ENCODE measurements at regions of chr1 and their contacts with region 1.

Region 1: GRCh38 chr1:223845810-223846682 is at the start of gene TP53BP2:
- DNase-seq: peak; percentile 86 to 95 (median 90)
- ATAC-seq: peak; percentile 92
- H3K4me3 ChIP-seq: peak within 1 kb of the TSS; percentile 84
- H3K4me3 Mint-ChIP-seq: peak within 1 kb of the TSS; percentile 88 to 99 (median 96)
- H3K27ac ChIP-seq: peak within 1 kb of the TSS; percentile 99
- H3K27ac Mint-ChIP-seq: peak within 1 kb of the TSS; percentile 94 to 99 (median 98)
- H3K4me1 ChIP-seq: peaks cover 14 to 27% of the 10 kb centered on the region in 2 donors
- H3K4me1 Mint-ChIP-seq: peaks cover 23 to 53% (median 40%) of the 10 kb centered on the region in 7 donors
- H3K27me3 ChIP-seq: no peaks in the 10 kb centered on the region
- H3K27me3 Mint-ChIP-seq: peaks cover 0 to 4% (median under 1%) of the 10 kb centered on the region in 5 donors
- total RNA-seq, gene TP53BP2: 30.3 to 120 (median 45.4) TPM

Region 2: GRCh38 chr1:223142795-223143536 is 703.1 kb before region 1 on chr1 and contains the start of gene TLR5:
- CTCF ChIA-PET with region 1: no interaction called
- POLR2A ChIA-PET with region 1: no interaction called
- intact Hi-C with region 1: loop called in 1 of 2 experiments (anchors 10 kb)
- DNase-seq: peak; percentile 81 to 92 (median 87)
- ATAC-seq: peak; percentile 94
- H3K4me3 ChIP-seq: peak within 1 kb of the TSS; percentile 65
- H3K4me3 Mint-ChIP-seq: peak within 1 kb of the TSS; percentile 69 to 89 (median 81)
- H3K27ac ChIP-seq: peak within 1 kb of the TSS; percentile 69
- H3K27ac Mint-ChIP-seq: peak within 1 kb of the TSS in 8 of 9 donors; percentile 48 to 95 (median 90)
- H3K4me1 ChIP-seq: peaks cover 13 to 15% of the 10 kb centered on the region in 2 donors
- H3K4me1 Mint-ChIP-seq: peaks cover 13 to 35% (median 27%) of the 10 kb centered on the region in 7 donors
- H3K27me3 ChIP-seq: no peaks in the 10 kb centered on the region
- H3K27me3 Mint-ChIP-seq: peaks cover 0 to 10% (median 0%) of the 10 kb centered on the region in 5 donors
- total RNA-seq, gene TLR5: 3.1 to 8.0 (median 6.6) TPM in 4 of 5 experiments, not detected in the other

Region 3: DNA sequence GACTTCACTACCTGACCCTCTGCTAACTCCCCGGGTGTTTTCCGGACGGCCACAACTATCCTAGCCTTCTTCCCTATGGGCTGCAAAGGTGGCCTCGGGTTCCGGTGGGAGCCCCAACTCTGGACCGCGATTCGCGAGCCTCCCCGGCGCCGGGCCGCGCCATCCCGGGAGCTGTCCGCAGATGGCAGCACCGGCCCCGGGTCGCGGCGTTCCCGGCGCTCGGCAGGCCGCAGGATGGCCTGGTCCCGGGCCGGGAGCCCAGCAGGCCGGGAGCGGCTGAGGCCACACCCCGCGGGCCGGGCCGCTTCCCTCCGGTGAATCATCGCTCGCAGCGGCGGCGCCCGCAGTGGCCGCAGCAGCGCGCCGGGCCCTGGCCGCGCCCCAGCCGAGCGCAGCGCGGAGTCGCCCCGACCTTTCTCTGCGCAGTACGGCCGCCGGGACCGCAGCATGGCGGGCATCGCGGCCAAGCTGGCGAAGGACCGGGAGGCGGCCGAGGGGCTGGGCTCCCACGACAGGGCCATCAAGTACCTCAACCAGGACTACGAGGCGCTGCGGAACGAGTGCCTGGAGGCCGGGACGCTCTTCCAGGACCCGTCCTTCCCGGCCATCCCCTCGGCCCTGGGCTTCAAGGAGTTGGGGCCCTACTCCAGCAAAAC is 133.7 kb before region 1 on chr1 and contains the start of gene CAPN2:
- CTCF ChIA-PET with region 1: no interaction called
- POLR2A ChIA-PET with region 1: interaction called, 3 read pairs
- intact Hi-C with region 1: loop called (anchors 2 to 5 kb)
- DNase-seq: peak; percentile 29 to 78 (median 51)
- ATAC-seq: peak; percentile 78
- H3K4me3 ChIP-seq: peak within 1 kb of the TSS; percentile 61
- H3K4me3 Mint-ChIP-seq: peak within 1 kb of the TSS; percentile 70 to 93 (median 84)
- H3K27ac ChIP-seq: peak within 1 kb of the TSS; percentile 83
- H3K27ac Mint-ChIP-seq: peak within 1 kb of the TSS; percentile 82 to 93 (median 88)
- H3K4me1 ChIP-seq: peaks cover 48 to 53% of the 10 kb centered on the region in 2 donors
- H3K4me1 Mint-ChIP-seq: peaks cover 52 to 69% (median 63%) of the 10 kb centered on the region in 7 donors
- H3K27me3 ChIP-seq: no peaks in the 10 kb centered on the region
- H3K27me3 Mint-ChIP-seq: peaks cover 0 to 8% (median 0%) of the 10 kb centered on the region in 5 donors
- total RNA-seq, gene CAPN2: 86.1 to 195 (median 117) TPM

Region 4: GRCh38 chr1:223860051-223860622 is 14.1 kb after region 1 on chr1:
- CTCF ChIA-PET with region 1: interaction called, 3 read pairs
- POLR2A ChIA-PET with region 1: interaction called, 11 read pairs
- intact Hi-C with region 1: no loop called
- DNase-seq: no peak
- ATAC-seq: no peak
- H3K4me3 ChIP-seq: no peak overlapping the region
- H3K4me3 Mint-ChIP-seq: no peak overlapping the region
- H3K27ac ChIP-seq: no peak overlapping the region
- H3K27ac Mint-ChIP-seq: no peak overlapping the region
- H3K4me1 ChIP-seq: no peaks in the 10 kb centered on the region
- H3K4me1 Mint-ChIP-seq: no peaks in the 10 kb centered on the region
- H3K27me3 ChIP-seq: no peaks in the 10 kb centered on the region
- H3K27me3 Mint-ChIP-seq: peaks cover 0 to 26% (median 0%) of the 10 kb centered on the region in 5 donors

Region 5: GRCh38 chr1:224223819-224224714 is 378.0 kb after region 1 on chr1:
- CTCF ChIA-PET with region 1: no interaction called
- POLR2A ChIA-PET with region 1: no interaction called
- intact Hi-C with region 1: no loop called
- DNase-seq: no peak
- ATAC-seq: no peak
- H3K4me3 ChIP-seq: no peak overlapping the region
- H3K4me3 Mint-ChIP-seq: no peak overlapping the region
- H3K27ac ChIP-seq: no peak overlapping the region
- H3K27ac Mint-ChIP-seq: peak overlapping the region in 1 of 9 donors; percentile 65
- H3K4me1 ChIP-seq: no peaks in the 10 kb centered on the region
- H3K4me1 Mint-ChIP-seq: no peaks in the 10 kb centered on the region
- H3K27me3 ChIP-seq: no peaks in the 10 kb centered on the region
- H3K27me3 Mint-ChIP-seq: peaks cover 0 to 3% (median 0%) of the 10 kb centered on the region in 5 donors

Region 6: GRCh38 chr1:224329842-224330753 is 484.1 kb after region 1 on chr1 and contains the start of gene NVL:
- CTCF ChIA-PET with region 1: no interaction called
- POLR2A ChIA-PET with region 1: interaction called, 5 read pairs
- intact Hi-C with region 1: loop called (anchors 1 kb)
- DNase-seq: peak; percentile 71 to 84 (median 79)
- ATAC-seq: peak; percentile 91
- H3K4me3 ChIP-seq: peak within 1 kb of the TSS; percentile 96
- H3K4me3 Mint-ChIP-seq: peak within 1 kb of the TSS; percentile 91 to 100 (median 97)
- H3K27ac ChIP-seq: peak within 1 kb of the TSS; percentile 90
- H3K27ac Mint-ChIP-seq: peak within 1 kb of the TSS; percentile 97 to 100 (median 99)
- H3K4me1 ChIP-seq: peaks cover 3 to 6% of the 10 kb centered on the region in 2 donors
- H3K4me1 Mint-ChIP-seq: peaks cover 29 to 63% (median 47%) of the 10 kb centered on the region in 7 donors
- H3K27me3 ChIP-seq: no peaks in the 10 kb centered on the region
- H3K27me3 Mint-ChIP-seq: no peaks in the 10 kb centered on the region
- total RNA-seq, gene NVL: 23.9 to 48.6 (median 44.7) TPM

Region 7: DNA sequence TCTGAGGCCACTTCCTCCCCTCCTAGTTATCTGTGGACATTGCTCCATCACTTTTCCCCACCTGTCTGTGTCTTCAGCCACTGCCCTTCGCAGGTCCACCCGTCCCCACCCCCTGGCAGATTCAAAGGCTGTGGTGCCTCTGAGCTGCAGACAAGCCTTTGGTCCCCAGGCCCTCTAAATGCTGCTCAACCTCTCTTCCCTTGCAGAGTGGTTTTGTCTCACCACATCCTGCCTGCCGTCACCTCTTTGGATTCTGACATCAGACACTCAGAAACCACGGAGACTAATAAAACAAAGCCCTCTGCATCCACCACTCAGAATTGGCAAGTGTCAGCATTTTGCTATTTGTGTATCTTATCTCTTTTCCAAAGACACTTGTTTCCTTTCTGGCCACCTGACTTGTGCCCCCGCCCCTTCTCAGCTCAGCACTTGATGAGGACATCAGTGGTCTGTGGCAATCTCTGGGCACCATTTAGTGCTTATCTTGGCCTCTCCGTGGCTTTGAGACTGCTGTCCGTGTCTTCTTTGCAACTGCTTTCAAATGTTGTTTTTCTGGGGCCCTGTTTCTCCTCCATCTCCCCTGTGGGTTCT is 777.8 kb after region 1 on chr1:
- CTCF ChIA-PET with region 1: no interaction called
- POLR2A ChIA-PET with region 1: no interaction called
- intact Hi-C with region 1: loop called in 1 of 2 experiments (anchors 2 kb)
- DNase-seq: peak in 8 of 9 donors; percentile 70 to 89 (median 83)
- ATAC-seq: peak; percentile 93
- H3K4me3 ChIP-seq: peak overlapping the region; percentile 40
- H3K4me3 Mint-ChIP-seq: peak overlapping the region; percentile 58 to 80 (median 72)
- H3K27ac ChIP-seq: no peak overlapping the region
- H3K27ac Mint-ChIP-seq: peak overlapping the region; percentile 66 to 95 (median 90)
- H3K4me1 ChIP-seq: peaks cover 18 to 25% of the 10 kb centered on the region in 2 donors
- H3K4me1 Mint-ChIP-seq: peaks cover 22 to 47% (median 31%) of the 10 kb centered on the region in 7 donors
- H3K27me3 ChIP-seq: no peaks in the 10 kb centered on the region
- H3K27me3 Mint-ChIP-seq: peaks cover 40 to 45% (median 44%) of the 10 kb centered on the region in 5 donors